Ovary (tissue), 10 donors: ENCODE measurements at regions of chr10 and their contacts with region 1.

Region 1: GRCh38 chr10:98628206-98628605 is 181.5 kb upstream of the HPS1 start:
- DNase-seq: no peak
- H3K4me3 ChIP-seq: no peak overlapping the region
- H3K27ac ChIP-seq: no peak overlapping the region
- H3K4me1 ChIP-seq: no peaks in the 10 kb centered on the region
- H3K27me3 ChIP-seq: no peaks in the 10 kb centered on the region
- CTCF ChIP-seq: no peak
- EP300 ChIP-seq: no peak
- POLR2A ChIP-seq: no peak

Region 2: GRCh38 chr10:98638920-98639319 is 10.7 kb after region 1 on chr10:
- intact Hi-C with region 1: loop called in 1 of 4 experiments (anchors 1 kb)
- DNase-seq: no peak
- H3K4me3 ChIP-seq: no peak overlapping the region
- H3K27ac ChIP-seq: no peak overlapping the region
- H3K4me1 ChIP-seq: no peaks in the 10 kb centered on the region
- H3K27me3 ChIP-seq: no peaks in the 10 kb centered on the region
- CTCF ChIP-seq: no peak
- EP300 ChIP-seq: no peak
- POLR2A ChIP-seq: no peak

Region 3: DNA sequence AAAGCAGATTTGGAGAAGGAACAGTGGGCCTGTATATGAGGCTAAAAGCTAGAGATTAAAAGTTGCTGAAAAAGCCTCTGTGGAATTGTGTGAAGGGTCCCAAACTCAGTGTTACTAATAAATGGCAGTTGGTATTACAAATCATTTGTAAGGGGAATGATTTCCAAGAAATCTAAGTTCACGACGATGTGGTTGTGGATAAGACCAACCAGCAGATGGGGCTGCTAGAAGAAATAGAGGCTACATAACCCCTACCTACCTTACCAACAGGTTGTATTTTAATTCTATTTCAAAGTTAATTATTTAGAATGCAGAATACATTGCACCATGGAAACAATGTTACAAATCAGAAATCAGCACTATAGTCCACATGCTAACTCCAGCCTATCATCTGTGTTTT is 230.3 kb after region 1 on chr10:
- intact Hi-C with region 1: no loop called
- DNase-seq: no peak
- H3K4me3 ChIP-seq: no peak overlapping the region
- H3K27ac ChIP-seq: no peak overlapping the region
- H3K4me1 ChIP-seq: no peaks in the 10 kb centered on the region
- H3K27me3 ChIP-seq: no peaks in the 10 kb centered on the region
- CTCF ChIP-seq: no peak
- EP300 ChIP-seq: no peak
- POLR2A ChIP-seq: no peak